Right lobe of liver (tissue), 6 donors: ENCODE measurements at regions of chr12 and their contacts with region 1.

Region 1: DNA sequence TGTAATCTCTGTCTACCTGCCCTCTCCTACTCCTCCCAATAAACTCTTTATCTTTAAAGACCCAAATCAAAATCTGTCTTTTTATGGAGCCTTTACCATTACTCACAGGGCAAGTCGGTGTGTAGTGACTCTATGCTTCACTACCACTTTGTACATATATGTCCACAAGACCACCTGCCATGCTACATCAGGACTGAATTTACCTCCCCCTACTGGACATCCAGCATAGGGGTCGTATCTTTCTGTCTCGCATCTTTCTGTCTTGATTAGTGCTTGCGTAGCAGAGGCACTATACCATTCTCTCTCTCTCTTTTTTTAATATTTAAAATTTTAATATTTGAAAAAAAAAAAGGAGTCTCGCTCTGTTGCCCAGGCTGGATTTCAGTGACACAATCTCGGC is 587.5 kb downstream of the SOX5 start:
- DNase-seq: no peak
- ATAC-seq: no peak
- H3K4me3 ChIP-seq: no peak overlapping the region
- H3K27ac ChIP-seq: no peak overlapping the region
- H3K4me1 ChIP-seq: no peaks in the 10 kb centered on the region
- H3K27me3 ChIP-seq: no peaks in the 10 kb centered on the region
- CTCF ChIP-seq: peak in 2 of 4 donors; percentile 10 to 15
- POLR2A ChIP-seq: no peak

Region 2: DNA sequence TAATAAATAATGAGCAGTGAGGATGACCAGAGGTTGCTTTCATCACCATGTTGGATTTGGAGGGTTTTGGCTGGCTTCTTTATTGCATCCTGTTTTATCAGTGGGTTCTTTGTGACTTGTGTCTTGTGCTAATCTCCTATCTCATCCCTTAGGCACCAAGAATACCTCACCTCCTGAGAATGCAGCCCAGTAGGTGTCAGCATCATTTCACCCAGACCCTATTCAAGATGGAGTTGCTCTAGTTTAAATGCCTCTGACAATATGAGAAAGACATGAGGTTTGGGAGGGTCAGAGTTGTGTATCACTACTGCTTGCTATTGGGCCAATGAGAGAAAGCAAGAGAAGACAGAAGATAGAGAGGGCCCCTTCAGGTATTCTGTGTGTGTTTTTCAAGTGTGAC is 144.8 kb before region 1 on chr12:
- intact Hi-C with region 1: loop called in 1 of 2 experiments (anchors 10 kb)
- DNase-seq: no peak
- ATAC-seq: peak in 3 of 4 donors; percentile 27 to 35 (median 33)
- H3K4me3 ChIP-seq: no peak overlapping the region
- H3K27ac ChIP-seq: no peak overlapping the region
- H3K4me1 ChIP-seq: no peaks in the 10 kb centered on the region
- H3K27me3 ChIP-seq: no peaks in the 10 kb centered on the region
- CTCF ChIP-seq: peak in 2 of 4 donors; percentile 6 to 22
- POLR2A ChIP-seq: no peak

Region 3: DNA sequence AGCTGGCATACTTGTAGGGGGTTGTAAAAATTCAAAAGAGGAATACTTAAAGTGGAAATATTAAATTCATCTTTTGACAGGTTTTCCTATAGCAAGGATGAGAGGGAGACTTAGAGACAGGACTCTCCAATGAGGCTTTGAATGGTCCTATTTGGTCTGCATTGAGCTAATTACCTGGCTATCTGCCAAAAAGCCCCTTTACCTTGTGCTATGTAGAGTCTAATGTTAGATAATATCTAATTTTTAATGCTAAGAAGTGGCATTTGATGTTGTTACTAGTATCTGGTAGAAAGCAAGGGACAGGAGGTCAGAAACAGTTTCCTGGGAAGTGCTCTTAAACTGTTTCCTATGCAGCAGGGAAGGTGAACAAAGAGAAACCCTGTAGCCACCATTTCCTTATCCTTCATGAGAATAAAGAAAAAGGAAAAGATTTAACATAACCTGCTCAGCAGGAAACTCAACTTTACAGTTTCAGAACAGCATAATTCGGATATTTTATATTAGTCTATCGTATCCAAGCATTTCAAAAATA is 37.5 kb after region 1 on chr12:
- intact Hi-C with region 1: no loop called
- DNase-seq: no peak
- ATAC-seq: no peak
- H3K4me3 ChIP-seq: no peak overlapping the region
- H3K27ac ChIP-seq: no peak overlapping the region
- H3K4me1 ChIP-seq: no peaks in the 10 kb centered on the region
- H3K27me3 ChIP-seq: no peaks in the 10 kb centered on the region
- CTCF ChIP-seq: no peak
- POLR2A ChIP-seq: no peak